BJ (cell line): ENCODE measurements at regions of chr10 and their contacts with region 1.

Region 1: GRCh38 chr10:97355571-97355975 is 21.0 kb upstream of the FRAT2 start:
- DNase-seq: no peak
- H3K4me3 ChIP-seq: no peak overlapping the region
- H3K27me3 ChIP-seq: no peaks in the 10 kb centered on the region
- CTCF ChIP-seq: peak; percentile 44

Region 2: DNA sequence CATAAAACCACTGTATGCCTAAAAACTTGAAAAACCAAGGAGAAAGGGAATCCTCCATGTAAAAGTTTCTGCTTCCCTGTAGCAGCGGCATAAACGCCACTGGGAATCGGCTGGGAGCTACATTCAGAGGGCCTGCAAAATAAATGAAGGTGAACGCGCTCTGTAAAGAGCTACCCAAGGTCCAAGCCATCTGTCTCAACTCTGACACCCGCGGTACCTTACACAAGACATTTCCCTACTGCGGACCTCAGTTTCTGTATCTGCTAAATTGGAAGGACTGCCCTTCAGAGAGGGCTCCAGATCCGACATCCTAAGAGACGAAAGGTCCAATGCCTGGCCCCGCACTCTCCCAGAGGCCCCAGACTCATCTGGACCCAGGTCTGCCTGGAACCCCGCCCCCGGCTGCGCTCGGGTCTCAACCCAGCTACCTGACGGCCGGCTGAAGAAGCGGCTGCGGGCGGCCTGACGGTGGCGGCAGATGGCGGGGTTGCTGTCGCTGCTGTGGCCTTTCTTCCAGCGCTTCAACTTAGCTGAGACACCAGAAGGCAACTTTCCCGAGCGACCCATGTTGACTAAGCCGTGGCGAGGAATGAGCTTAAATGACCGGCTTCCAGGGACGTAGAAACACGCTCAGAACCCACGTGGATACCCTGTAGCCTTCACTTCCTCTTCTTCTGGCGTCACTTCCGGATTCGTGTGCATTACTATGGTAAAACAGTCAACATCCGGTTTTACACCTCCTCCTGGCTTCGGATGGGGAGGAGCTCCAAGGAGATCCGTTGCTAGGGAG is 45.3 kb after region 1 on chr10 and contains the start of gene RRP12:
- CTCF ChIA-PET with region 1: interaction called, 10 read pairs
- POLR2A ChIA-PET with region 1: no interaction called
- DNase-seq: peak; percentile 91
- H3K4me3 ChIP-seq: peak within 1 kb of the TSS; percentile 91
- H3K27me3 ChIP-seq: no peaks in the 10 kb centered on the region
- CTCF ChIP-seq: peak; percentile 23; the same call in 1 of the 2 replicates
- polyA plus RNA-seq, gene RRP12: 9.3 and 16.3 TPM in 2 replicates